H1 (cell line): ENCODE measurements at regions of chr6 and their contacts with region 1.

Region 1: DNA sequence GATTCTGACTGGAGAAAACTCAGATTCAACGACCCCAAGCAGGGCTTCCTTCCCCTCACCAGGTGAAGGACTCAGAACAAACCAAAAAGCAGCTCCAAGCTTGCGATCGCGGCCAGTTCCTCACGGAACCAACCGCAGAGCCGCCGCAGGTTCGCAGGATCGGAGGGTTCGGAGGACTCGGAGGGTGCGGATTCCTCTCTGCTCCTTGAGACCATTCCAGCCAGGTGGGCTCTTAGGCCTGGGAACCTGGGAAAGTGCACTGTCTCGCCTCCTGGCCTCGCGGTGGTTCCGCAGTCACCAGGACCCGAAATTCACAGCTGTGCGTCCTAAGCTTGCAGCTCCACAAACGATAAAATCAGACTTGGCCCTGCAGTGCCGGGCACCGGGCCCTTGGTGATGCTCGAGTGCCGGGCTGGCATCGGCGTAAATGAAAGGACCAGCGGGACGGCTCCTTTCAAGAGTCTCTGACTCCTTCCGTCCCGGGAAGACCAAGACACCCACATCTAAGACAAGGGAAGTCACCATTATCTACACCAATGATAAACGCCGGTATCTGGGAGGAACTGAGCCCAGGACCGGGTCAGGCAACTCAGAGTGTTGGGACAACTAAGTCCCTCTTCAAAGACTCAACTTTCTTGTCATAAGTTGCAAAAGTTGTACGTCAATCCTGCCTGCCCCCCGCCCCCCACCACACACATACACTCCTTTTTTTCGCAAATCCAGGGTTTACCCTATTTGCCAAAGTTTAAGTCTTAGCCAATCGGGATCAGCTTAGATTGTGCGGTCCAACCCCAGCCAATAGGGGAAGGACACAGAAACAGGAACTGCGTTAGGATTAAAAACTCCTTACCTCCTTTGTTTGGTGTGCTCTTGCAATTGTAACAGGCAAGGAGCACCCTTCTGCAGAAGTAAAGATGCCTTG is 69.8 kb upstream of the PRSS16 start:
- DNase-seq: peak in 1 of 2 experiments; percentile 84
- H3K4me3 ChIP-seq: peak overlapping the region; percentile 96 to 100 (median 100)
- H3K27ac ChIP-seq: peak overlapping the region; percentile 89
- H3K4me1 ChIP-seq: peaks cover 0 to 6% (median 1%) of the 10 kb centered on the region in 4 experiments; a peak in 3 of 7 replicates
- H3K27me3 ChIP-seq: no peaks in the 10 kb centered on the region
- CTCF ChIP-seq: peak; percentile 38 to 63 (median 47)
- EP300 ChIP-seq: no peak
- POLR2A ChIP-seq: peak; percentile 64 to 70
- RAD21 ChIP-seq: peak; percentile 48 to 63

Region 2: DNA sequence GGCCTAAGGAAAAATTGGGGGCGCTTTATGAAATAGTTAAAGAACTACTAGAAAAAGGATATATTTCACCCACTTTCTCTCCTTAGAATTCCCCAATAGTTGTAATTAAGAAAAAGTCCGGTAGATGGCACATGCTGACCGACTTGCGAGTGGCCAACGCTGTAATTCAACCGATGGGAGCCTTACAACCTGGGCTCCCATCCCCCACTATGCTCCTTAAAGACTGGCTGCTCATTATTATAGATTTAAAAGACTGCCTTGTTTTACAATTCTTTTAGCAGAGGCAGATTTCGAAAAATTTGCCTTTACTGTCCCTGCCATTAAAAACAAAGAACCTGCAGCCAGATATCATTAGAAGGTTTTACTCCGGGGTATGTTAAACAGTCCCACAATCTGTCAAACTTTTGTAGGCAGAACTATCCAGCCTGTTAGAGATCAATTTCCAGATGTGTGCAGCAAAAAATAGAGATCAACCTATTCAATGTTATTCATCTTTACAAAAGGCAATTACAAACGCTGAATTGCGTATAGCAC is 11.2 kb after region 1 on chr6:
- CTCF ChIA-PET with region 1: interaction called, 7 read pairs
- POLR2A ChIA-PET with region 1: interaction called, 27 read pairs
- DNase-seq: no peak
- H3K4me3 ChIP-seq: peak overlapping the region; percentile 62 to 89 (median 73)
- H3K27ac ChIP-seq: no peak overlapping the region; the same call in 1 of the 2 replicates
- H3K4me1 ChIP-seq: no peaks in the 10 kb centered on the region; a peak in 1 of 7 replicates
- H3K27me3 ChIP-seq: no peaks in the 10 kb centered on the region; a peak in 1 of 7 replicates
- CTCF ChIP-seq: peak; percentile 16 to 56 (median 44)
- EP300 ChIP-seq: no peak
- POLR2A ChIP-seq: no peak
- RAD21 ChIP-seq: peak; percentile 82 to 84

Region 3: DNA sequence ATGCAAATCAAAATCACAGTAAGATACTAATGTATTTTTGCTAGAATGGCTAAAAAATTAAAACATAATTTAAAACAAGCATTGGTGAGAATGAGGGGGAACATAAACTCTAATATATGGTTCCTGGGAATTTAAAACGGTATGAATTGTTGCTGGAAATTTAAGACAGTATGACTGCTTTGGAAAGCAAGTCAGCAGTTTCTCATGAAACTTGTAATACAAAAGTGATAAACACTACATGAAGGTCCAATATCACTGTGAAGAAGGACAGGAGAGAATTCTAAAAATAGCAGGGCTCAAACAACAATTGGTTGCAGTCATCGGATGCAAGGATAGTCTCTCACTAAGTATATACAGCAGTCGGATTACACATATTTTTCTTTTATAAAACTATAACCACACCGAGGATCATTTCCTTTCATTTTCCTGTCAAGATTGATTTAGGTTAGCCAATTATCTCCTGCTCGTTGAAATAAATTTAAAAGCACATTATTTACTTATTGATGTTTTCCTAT is 51.3 kb after region 1 on chr6:
- CTCF ChIA-PET with region 1: no interaction called
- POLR2A ChIA-PET with region 1: no interaction called
- DNase-seq: no peak
- H3K4me3 ChIP-seq: peak overlapping the region; percentile 51 to 65 (median 59); a peak in 7 of 8 replicates
- H3K27ac ChIP-seq: no peak overlapping the region
- H3K4me1 ChIP-seq: peaks cover 0 to 4% (median 0%) of the 10 kb centered on the region in 4 experiments; a peak in 1 of 7 replicates
- H3K27me3 ChIP-seq: no peaks in the 10 kb centered on the region
- CTCF ChIP-seq: no peak
- EP300 ChIP-seq: no peak
- POLR2A ChIP-seq: no peak
- RAD21 ChIP-seq: no peak